ENCODE measurements at regions of chrX and their contacts with region 1.

Region 1: DNA sequence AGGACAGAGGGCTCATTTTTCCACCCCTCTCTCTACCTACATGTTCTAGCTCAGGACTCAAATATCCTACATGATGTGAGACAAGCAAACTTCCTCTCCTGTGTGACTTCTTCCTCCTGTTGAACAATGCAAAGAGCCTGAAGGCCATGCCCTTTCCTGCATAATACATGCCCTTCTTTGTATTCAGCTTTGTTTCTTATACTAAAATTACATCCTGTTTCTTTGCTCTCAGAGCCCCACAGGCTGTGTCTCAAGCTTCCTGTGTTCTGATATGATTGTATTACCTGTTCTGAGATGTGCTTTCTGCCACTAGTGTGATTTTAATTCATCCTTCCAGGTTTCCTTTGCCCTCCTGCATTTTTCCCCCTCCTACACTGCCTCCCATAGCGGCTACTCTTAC is 166.4 kb upstream of the AFF2 start:
- DNase-seq: no peak
- ATAC-seq: no peak
- H3K4me3 Mint-ChIP-seq: no peak overlapping the region
- H3K27ac Mint-ChIP-seq: no peak overlapping the region
- H3K4me1 Mint-ChIP-seq: peaks cover 10% of the 10 kb centered on the region
- H3K27me3 Mint-ChIP-seq: no peaks in the 10 kb centered on the region
- CTCF ChIP-seq: no peak

Region 2: DNA sequence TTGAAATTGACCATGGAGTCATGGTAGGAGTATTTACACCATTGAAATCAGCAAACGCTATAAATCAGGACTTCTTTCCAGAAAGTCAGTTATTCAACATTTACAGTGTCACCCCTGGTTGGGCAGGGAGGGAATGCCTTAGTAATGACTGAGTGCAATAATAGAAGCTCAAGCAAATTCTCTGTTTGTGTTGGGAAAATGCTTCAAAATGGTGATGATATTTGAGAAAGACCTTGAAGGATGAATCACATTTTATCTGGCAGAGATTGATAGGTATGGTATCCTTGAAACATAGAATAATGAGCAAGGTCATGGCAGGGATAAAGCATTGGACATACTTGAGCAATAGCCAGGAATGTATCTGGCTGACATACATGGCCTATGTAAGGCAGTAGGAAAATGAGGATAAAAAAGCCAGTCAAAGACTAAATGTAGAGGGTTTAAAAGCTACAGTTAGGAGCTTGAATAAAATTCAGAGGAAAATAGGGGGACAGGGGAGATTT is 104.1 kb before region 1 on chrX:
- CTCF ChIA-PET with region 1: no interaction called
- POLR2A ChIA-PET with region 1: no interaction called
- intact Hi-C with region 1: no loop called
- DNase-seq: no peak
- ATAC-seq: no peak
- H3K4me3 Mint-ChIP-seq: no peak overlapping the region
- H3K27ac Mint-ChIP-seq: no peak overlapping the region
- H3K4me1 Mint-ChIP-seq: no peaks in the 10 kb centered on the region
- H3K27me3 Mint-ChIP-seq: no peaks in the 10 kb centered on the region
- CTCF ChIP-seq: no peak

Region 3: DNA sequence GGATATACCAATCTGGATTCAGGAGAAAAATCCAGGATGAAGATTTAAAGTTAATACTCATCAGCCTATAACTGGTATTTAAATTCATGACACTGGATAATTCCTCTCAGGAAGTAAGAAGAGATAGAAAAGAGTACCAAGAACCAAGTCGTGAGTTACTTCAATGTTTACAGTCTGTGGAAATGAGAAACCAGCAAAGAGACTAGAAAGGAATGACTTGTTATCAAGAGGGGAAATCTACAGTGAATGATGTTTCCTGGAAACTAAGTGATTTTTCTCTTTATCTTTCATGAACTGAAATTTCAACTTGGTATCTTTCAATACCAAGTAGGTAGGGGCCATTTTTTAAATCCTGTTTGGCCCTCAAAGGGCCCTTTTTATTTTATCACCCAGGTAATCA is 51.5 kb before region 1 on chrX:
- CTCF ChIA-PET with region 1: no interaction called
- POLR2A ChIA-PET with region 1: no interaction called
- intact Hi-C with region 1: loop called (anchors 10 kb)
- DNase-seq: no peak
- ATAC-seq: no peak
- H3K4me3 Mint-ChIP-seq: no peak overlapping the region
- H3K27ac Mint-ChIP-seq: no peak overlapping the region
- H3K4me1 Mint-ChIP-seq: peaks cover 4% of the 10 kb centered on the region
- H3K27me3 Mint-ChIP-seq: no peaks in the 10 kb centered on the region
- CTCF ChIP-seq: no peak